ENCODE measurements at regions of chr18 and their contacts with region 1.

Region 1: GRCh38 chr18:6920099-6920899 is 190.8 kb downstream of the ARHGAP28 start:
- DNase-seq: no peak

Region 2: DNA sequence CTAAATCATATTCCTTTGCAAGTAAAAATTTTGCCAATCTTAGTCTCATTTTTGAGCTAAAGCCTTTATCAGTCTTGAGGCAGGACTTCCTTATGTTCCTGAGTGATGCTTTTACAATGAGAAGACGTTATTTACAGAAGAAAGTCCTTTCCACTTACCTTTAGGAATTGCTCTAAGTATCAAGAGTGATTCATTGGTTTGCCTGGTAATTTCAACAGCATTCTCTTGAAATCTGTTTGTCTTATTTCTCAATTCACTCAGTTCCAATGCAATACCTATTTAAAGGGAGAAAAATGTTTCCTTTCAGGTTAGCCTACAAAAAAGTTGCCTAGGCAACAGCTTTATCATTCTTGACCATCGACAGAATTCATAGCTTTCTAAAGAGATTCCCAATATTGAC is 60.1 kb after region 1 on chr18:
- intact Hi-C with region 1: loop called in 1 of 2 experiments (anchors 10 kb)
- DNase-seq: no peak

Region 3: DNA sequence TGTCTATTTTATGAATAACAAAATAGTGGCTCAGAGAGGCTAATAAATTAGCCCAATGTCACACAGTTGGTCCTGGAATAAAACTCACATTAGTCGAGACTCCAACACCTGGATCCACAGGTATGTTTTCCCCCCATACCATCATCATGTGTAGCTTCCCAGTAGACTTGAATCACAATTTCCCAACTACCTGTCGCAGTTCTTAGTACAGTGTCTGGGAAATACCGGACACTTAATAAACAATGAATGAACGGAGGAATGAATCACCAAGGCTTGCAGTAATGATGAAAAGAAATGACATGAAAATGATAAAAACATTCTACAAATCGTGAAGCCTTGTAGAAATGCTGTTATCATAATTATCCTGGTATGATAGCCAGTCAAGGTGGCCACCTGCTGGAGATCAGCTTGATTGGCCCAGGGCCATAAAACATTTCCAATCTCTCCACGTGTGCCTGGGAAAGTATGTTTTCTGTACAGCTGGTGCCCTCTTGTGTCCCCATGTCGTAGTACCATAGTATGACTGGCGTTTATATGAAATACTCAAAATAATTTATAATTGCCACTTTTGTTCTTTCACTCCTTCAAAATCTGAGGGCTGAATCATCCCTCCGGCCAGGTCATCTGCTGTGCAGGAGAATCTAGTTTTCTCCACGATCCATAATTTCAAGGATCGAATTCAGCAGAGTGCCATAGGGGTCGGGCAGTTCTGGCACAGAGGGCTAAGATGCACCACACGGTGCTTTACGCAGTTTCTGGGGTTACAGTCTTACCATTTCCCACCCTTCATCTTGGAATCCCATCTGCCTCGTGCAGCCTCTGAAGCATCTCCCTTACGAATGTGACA is 101.9 kb after region 1 on chr18:
- intact Hi-C with region 1: loop called in 1 of 2 experiments (anchors 10 kb)
- DNase-seq: no peak

Region 4: GRCh38 chr18:7177116-7177744 is 256.9 kb after region 1 on chr18:
- intact Hi-C with region 1: loop called in 1 of 2 experiments (anchors 5 kb)
- DNase-seq: no peak

Measured in posterior vena cava (tissue), 2 donors.